Posterior vena cava (tissue), 2 donors: ENCODE measurements at regions of chr17 and their contacts with region 1.

Region 1: DNA sequence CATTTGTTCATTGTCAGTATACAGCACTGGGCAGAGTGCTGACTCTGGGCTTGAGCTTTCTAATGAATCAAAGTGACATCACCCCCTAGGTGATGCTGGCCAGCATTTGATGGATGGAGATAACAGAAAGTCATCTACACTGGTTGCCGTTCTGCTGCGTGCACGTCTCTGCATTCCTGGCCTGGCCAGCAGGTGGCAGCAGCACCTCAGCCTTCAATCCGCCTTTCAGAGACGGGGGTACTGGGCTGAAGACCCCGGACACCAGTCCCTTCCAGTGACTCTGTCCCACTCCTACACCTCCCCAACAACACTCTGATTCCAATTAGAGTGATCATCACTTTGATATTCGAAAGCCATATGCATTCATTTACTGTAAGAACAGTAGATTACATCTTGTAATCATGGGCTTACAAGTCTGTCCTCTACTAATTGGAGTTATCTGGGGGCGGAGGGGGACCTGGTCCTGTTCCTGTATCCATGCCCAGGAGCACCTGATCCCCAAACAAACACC is 6.0 kb downstream of the CPSF4L start:
- DNase-seq: peak; percentile 86

Region 2: DNA sequence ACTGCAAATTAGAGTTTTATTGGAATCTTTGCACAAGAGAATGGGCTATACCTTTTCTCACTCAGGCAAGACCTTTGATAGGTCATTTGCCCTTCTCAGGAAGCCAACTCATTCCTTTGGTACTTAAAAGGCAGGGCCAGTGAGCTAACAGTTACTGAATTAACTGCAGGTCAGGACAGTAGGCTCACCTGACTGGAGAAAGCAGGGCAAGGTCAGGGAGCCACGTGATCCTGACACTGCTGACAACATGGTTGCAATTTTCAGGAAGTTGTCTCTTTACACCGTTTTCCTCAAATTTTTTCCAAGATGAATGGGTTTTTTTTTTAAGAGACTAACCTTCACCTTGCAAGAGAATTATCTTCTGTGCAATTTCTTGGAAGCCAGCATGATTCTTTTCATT is 15.2 kb before region 1 on chr17:
- intact Hi-C with region 1: no loop called
- DNase-seq: no peak

Region 3: GRCh38 chr17:73365906-73366623 is 110.3 kb after region 1 on chr17:
- intact Hi-C with region 1: loop called (anchors 2 kb)
- DNase-seq: no peak

Region 4: DNA sequence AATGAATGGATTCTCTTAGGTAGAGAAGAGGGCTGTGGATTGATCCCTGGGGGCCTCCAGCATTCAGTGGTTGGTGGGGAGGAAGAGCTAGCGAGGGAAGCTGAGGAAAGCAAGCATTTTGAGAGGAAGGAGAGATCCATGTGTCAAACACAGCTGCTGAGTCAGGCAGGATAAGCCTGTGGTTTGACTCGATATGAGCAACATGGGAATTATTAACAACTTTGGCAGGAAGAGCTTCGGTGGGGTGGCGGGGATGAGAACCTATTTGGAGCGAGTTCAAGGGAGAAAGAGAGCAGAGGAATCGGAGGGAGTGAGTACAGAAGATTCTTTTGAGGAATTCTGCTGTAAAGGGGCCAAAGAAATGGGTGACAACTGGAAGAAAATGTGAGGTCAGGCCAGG is 115.6 kb after region 1 on chr17:
- intact Hi-C with region 1: loop called (anchors 2 kb)
- DNase-seq: no peak